Upper lobe of right lung (tissue), 1 donor: ENCODE measurements at regions of chr3 and their contacts with region 1.

Region 1: DNA sequence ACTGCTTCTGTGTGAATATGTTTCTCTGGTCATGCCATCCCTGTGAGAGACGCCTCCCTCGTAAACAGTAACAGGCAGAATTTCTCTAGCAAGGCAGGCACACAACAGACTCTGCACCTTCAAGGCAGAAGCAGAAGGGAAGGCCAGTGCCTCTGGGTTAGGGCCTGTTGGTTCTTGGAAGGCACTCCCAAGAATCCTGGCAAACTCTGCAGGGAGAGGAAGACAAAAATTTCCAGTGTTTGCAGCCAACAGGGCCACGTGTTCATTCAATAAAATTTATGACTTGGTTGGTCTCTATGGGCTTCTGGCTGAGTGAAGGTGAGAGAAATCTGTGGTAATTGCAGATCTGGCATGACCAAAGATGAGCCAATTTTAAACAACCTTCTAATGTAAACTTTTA is 39.3 kb downstream of the NFKBIZ start:
- DNase-seq: no peak
- ATAC-seq: no peak
- H3K4me3 ChIP-seq: no peak overlapping the region
- H3K27ac ChIP-seq: no peak overlapping the region
- H3K4me1 ChIP-seq: no peaks in the 10 kb centered on the region
- H3K27me3 ChIP-seq: no peaks in the 10 kb centered on the region
- CTCF ChIP-seq: no peak

Region 2: DNA sequence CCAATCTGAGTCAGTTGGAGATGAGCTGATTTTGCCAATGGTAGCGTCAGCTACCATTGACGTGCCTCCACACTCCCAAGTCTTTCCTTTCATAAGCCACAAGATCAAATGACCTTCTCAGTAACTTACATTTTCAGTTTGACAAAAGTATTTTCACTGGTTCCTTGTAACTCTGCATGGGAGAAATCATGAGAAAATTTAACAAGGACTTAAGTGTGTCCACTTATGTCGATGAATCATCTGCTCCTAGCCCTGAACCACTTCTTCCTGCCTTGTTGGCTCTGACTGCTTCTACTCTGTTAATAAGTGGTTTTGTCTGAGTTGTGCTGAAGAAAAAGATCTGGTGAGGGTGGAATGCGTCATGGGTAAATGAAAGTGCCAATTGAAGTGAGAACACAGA is 61.9 kb after region 1 on chr3:
- intact Hi-C with region 1: loop called (anchors 5 kb)
- DNase-seq: no peak
- ATAC-seq: peak; percentile 93
- H3K4me3 ChIP-seq: no peak overlapping the region
- H3K27ac ChIP-seq: no peak overlapping the region
- H3K4me1 ChIP-seq: no peaks in the 10 kb centered on the region
- H3K27me3 ChIP-seq: no peaks in the 10 kb centered on the region
- CTCF ChIP-seq: no peak

Region 3: DNA sequence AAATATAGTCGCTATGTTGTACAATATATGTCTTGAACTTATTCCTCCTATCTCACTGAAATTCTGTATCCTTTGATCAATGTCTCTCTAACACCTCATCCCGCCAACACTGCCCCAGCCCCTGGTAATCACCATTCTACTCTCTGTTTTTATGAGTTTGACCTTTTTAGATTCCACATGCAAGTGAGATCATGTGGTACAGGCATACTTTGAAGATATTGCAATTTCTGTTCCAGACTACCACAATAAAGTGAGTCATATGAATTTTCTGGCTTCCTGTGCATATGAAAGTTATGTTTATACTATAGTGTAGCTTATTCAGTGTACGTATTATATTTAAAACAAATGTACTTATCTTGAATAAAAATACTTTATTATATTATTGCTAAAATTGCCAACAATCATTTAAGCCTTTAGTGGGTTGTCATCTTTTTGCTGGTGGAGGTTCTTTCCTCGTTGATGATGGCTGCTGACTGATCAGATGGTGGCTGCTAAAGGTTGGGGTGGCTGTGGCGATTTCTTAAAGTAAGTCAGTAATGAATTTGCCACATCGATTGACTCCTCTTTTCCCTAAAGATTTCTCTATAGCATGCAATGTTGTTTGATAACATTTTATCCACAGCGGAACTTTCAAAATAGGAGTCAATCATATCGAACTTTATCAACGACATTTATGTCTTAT is 217.9 kb after region 1 on chr3:
- intact Hi-C with region 1: no loop called
- DNase-seq: no peak
- ATAC-seq: no peak
- H3K4me3 ChIP-seq: no peak overlapping the region
- H3K27ac ChIP-seq: no peak overlapping the region
- H3K4me1 ChIP-seq: no peaks in the 10 kb centered on the region
- H3K27me3 ChIP-seq: no peaks in the 10 kb centered on the region
- CTCF ChIP-seq: no peak